AG04450 (cell line): ENCODE measurements at regions of chr3 and their contacts with region 1.

Region 1: DNA sequence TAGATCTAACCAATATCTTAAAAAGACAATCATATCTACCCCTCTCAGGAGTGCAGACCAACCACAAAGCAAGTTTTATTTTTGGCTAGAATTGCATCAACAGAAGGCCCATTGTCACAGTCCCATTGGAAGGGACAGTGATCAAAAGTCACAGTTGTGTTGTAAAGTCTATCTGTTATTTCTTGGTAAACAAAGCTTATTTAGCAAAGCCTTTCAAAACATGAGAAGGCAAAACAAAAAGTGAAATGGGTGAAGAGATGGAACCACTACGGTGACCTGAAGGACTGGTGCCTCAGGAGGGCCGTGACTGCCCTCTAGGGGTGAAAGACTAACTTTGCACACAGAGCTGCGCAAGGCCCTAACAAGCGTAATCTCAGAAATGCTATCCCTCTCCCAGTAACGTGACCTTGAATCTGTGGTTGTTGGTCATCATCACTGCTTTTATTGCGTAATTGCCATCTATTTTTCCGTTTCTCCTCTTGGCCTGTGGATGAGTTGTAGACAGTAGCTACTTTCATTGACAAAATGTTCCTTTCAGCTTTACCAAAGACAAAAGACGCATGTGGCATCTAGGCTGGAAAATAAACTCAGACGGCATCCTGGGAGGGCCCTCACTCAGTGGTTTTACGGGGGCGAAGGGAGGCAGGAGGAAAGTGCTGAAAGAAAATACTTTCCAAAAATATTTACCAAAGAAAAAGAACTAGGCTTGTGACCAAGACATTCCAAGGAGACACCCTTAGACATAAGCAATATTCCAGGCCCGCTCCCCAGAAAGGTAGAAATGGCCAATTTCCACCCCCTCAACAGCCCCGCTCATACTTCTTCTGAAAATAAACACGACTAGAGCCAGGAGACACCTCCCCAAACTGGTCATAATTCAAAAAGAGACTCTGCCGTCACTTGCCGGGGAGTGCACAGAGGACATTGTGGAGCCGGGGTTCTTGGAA is 79.4 kb downstream of the FRMD4B start:
- DNase-seq: peak; percentile 67
- H3K4me3 ChIP-seq: no peak overlapping the region
- H3K27ac ChIP-seq: no peak overlapping the region
- H3K27me3 ChIP-seq: no peaks in the 10 kb centered on the region
- CTCF ChIP-seq: peak; percentile 97

Region 2: GRCh38 chr3:69120879-69121464 is 185.5 kb before region 1 on chr3:
- CTCF ChIA-PET with region 1: interaction called, 98 read pairs
- POLR2A ChIA-PET with region 1: no interaction called
- DNase-seq: peak; percentile 27
- H3K4me3 ChIP-seq: no peak overlapping the region
- H3K27ac ChIP-seq: no peak overlapping the region
- H3K27me3 ChIP-seq: peaks cover 2% of the 10 kb centered on the region
- CTCF ChIP-seq: peak; percentile 99

Region 3: DNA sequence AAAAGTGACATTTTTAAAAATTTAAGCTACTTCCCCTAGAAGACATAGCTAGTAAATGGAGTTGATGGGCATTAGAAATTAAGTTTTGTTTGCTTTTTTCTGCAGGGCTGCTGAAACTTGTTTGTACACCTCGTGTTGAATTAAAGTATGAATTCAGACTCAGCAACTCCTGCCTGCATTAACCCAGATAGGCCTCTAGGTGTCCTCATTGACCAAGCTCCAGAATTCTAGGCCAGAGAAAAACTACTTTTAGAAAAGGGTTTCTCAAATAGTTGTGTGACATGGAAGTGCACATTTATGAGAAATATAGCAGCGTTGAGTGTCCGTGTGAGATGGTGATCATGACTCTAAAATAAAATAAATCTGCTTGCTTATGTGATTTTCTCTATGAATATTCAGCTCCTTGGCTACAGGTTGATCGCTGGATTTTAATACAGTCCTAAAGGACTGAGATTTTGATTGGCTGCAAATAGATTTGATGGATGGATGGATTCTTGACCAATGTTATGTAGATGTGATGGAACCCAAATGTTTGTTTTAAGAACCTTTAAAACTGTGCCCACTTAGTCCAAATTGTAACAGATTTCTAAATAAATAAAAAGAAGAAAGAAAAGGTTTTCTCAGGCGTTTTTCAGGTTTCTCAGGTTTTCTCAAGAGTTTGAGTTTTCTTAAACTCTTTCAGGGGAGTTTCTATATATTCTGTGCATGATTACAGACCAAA is 144.8 kb before region 1 on chr3:
- CTCF ChIA-PET with region 1: interaction called, 368 read pairs
- POLR2A ChIA-PET with region 1: no interaction called
- DNase-seq: peak; percentile 7
- H3K4me3 ChIP-seq: no peak overlapping the region
- H3K27ac ChIP-seq: no peak overlapping the region
- H3K27me3 ChIP-seq: peaks cover 11% of the 10 kb centered on the region
- CTCF ChIP-seq: peak; percentile 98

Region 4: DNA sequence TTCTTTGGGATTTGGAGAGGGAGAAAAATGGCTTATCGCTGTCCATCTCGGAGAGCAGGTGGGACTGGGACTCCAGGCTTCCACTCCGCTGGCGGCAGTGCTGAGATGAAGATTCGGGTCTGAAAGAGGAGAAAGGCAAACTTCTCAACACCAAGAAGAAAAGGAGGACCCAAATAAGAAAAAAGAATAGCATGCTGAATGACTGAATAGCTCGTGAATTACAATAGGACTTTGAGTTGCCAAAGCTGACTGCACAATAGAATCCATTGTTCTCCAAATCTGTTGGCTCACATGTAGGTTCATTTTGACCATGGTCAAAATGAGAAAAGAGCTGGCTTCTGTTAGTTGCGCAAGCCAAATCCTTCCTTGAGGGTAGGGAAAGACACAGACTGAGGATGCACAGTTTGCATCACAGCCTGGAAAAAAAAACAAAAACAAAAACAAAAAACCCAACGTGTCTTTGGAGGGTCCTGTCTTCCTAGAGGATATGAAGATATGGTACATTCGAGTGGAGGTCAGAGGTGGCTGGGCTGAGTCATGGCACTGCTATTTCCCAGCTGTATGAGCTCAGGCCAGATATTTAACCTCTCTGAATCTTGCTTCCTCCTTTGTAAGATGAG is 124.8 kb before region 1 on chr3:
- CTCF ChIA-PET with region 1: interaction called, 12 read pairs
- POLR2A ChIA-PET with region 1: no interaction called
- DNase-seq: no peak
- H3K4me3 ChIP-seq: no peak overlapping the region
- H3K27ac ChIP-seq: peak overlapping the region; percentile 31
- H3K27me3 ChIP-seq: no peaks in the 10 kb centered on the region
- CTCF ChIP-seq: no peak

Region 5: GRCh38 chr3:69288161-69288895 is 18.2 kb before region 1 on chr3:
- CTCF ChIA-PET with region 1: interaction called, 19 read pairs
- POLR2A ChIA-PET with region 1: no interaction called
- DNase-seq: no peak
- H3K4me3 ChIP-seq: no peak overlapping the region
- H3K27ac ChIP-seq: no peak overlapping the region
- H3K27me3 ChIP-seq: peaks cover 5% of the 10 kb centered on the region
- CTCF ChIP-seq: no peak

Region 6: DNA sequence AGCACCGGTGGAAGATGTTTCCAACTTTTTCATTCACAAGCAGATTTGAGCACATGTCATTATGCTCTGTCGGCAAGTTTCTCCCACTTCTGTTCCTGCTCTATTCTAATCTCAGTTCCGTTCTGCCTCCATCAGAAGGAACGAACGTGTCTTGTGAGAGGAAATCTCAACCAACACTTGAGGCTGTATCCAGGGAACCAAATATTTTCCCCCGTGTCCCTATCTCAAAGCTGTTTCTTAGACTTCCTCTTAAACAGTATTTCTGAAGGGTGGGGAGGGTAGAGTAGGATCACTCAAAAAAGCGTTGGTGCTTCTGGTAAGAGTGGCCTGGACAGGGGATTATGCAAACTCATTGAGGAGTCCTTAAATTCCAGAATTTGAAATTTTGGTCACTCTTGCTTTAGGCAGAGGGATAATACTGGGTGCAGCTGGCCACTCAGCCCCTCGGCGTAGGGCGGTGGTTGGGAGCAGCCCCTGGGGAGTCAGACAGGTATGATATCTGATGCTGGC is 24.4 kb after region 1 on chr3:
- CTCF ChIA-PET with region 1: interaction called, 26 read pairs
- POLR2A ChIA-PET with region 1: no interaction called
- DNase-seq: no peak
- H3K4me3 ChIP-seq: no peak overlapping the region
- H3K27ac ChIP-seq: no peak overlapping the region
- H3K27me3 ChIP-seq: peaks cover 3% of the 10 kb centered on the region
- CTCF ChIP-seq: no peak